Activated CD4-positive, alpha-beta T cell treated with anti-CD3 and anti-CD28 coated beads for 36 hours (primary cell): ENCODE measurements at regions of chr14 and their contacts with region 1.

Region 1: DNA sequence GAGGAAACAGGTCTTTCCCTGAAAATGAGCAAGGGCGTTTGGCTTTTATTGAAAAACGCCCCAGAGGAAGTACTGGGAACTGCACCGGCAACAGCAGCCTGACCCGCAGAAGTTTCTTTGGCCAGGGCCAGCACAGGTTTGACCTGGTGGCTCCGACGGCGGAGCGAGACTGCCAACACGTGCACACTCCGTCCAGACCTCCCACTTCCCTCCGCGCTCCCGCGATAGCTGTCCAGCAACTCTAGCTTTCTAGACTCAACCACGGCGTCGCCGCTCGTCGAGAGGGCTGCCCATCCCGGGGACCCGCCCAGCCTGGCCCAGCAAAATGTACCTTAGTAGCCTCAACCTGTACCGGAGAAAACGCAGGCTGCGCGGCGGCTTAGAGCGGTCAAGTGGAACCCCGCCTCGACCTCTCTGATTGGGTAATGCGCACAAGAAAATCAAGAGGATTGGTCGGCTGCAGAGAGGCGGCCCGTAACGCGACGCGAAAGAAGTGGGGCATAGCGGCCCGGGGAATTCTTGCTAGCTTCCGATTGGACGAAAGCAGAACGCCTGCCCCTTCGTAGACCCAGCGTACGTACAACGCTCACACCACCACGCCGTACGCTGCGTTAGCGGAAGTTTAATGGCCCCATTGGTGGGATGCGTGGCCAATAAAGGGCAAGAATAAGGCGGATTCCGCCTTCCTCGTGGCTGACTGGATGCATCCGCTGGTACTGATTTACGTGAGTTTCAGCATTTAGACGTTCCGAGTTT is at the start of gene WDR89:
- DNase-seq: peak; percentile 98
- ATAC-seq: peak; percentile 87
- H3K4me3 Mint-ChIP-seq: peak within 1 kb of the TSS; percentile 79
- H3K27ac Mint-ChIP-seq: peak within 1 kb of the TSS; percentile 97
- H3K4me1 Mint-ChIP-seq: peaks cover 43% of the 10 kb centered on the region
- H3K27me3 Mint-ChIP-seq: no peaks in the 10 kb centered on the region
- total RNA-seq, gene WDR89: 13.9 to 27.2 TPM

Region 2: GRCh38 chr14:63276492-63277342 is 364.9 kb before region 1 on chr14:
- CTCF ChIA-PET with region 1: no interaction called
- POLR2A ChIA-PET with region 1: no interaction called
- intact Hi-C with region 1: no loop called
- DNase-seq: no peak
- ATAC-seq: peak; percentile 77
- H3K4me3 Mint-ChIP-seq: no peak overlapping the region
- H3K27ac Mint-ChIP-seq: no peak overlapping the region
- H3K4me1 Mint-ChIP-seq: no peaks in the 10 kb centered on the region
- H3K27me3 Mint-ChIP-seq: peaks cover 6% of the 10 kb centered on the region

Region 3: GRCh38 chr14:63308723-63309317 is 332.8 kb before region 1 on chr14:
- CTCF ChIA-PET with region 1: no interaction called
- POLR2A ChIA-PET with region 1: no interaction called
- intact Hi-C with region 1: no loop called
- DNase-seq: peak; percentile 28
- ATAC-seq: no peak
- H3K4me3 Mint-ChIP-seq: no peak overlapping the region
- H3K27ac Mint-ChIP-seq: no peak overlapping the region
- H3K4me1 Mint-ChIP-seq: no peaks in the 10 kb centered on the region
- H3K27me3 Mint-ChIP-seq: peaks cover 5% of the 10 kb centered on the region

Region 4: DNA sequence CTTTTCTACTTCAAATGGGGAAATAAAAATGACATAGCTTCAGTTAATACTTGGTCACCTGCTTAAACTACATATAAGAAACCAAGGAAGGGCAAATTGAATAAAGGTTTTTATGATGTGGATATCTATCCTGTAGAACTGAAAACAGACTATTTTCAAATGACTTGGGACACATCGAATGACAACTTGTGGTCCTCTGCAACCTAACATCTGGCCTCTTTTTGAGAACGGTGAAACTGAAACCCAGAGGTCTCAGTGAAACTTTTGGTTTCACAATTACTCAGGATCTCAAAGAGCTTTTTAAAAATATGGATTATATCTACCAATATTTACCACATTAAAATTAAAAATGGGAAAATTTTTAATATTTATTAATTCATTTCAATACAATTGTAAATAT is 163.6 kb before region 1 on chr14:
- CTCF ChIA-PET with region 1: interaction called, 3 read pairs
- POLR2A ChIA-PET with region 1: interaction called, 5 read pairs
- intact Hi-C with region 1: loop called in 1 of 2 experiments (anchors 5 kb)
- DNase-seq: peak; percentile 30
- ATAC-seq: peak; percentile 90
- H3K4me3 Mint-ChIP-seq: no peak overlapping the region
- H3K27ac Mint-ChIP-seq: no peak overlapping the region
- H3K4me1 Mint-ChIP-seq: peaks cover 52% of the 10 kb centered on the region
- H3K27me3 Mint-ChIP-seq: no peaks in the 10 kb centered on the region

Region 5: GRCh38 chr14:63543000-63543825 is 98.4 kb before region 1 on chr14 and contains the start of gene PPP2R5E:
- CTCF ChIA-PET with region 1: interaction called, 4 read pairs
- POLR2A ChIA-PET with region 1: interaction called, 11 read pairs
- intact Hi-C with region 1: loop called (anchors 1 kb)
- DNase-seq: peak; percentile 98
- ATAC-seq: peak; percentile 99
- H3K4me3 Mint-ChIP-seq: peak within 1 kb of the TSS; percentile 86
- H3K27ac Mint-ChIP-seq: peak within 1 kb of the TSS; percentile 85
- H3K4me1 Mint-ChIP-seq: peaks cover 26% of the 10 kb centered on the region
- H3K27me3 Mint-ChIP-seq: no peaks in the 10 kb centered on the region
- total RNA-seq, gene PPP2R5E: 38.4 to 40.4 TPM

Region 6: DNA sequence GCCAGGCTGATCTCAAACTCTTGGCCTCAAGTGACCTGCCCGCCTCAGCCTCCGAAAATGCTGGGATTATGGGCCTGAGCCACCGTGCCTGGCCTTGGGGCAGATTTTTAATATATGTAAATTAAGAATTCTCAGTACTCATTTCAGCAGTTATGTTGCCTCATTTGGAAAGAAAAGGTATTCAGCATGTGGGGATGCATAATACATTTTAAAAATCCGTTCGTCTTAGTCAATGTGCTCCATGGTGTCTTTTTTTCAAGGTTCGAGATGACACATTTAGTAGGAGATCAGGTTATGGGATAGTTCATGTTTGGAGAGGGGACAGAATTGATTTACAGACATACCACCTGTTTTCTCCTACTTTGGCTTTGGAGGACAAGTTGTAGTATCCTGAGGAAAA is 221.4 kb after region 1 on chr14:
- CTCF ChIA-PET with region 1: no interaction called
- POLR2A ChIA-PET with region 1: interaction called, 4 read pairs
- intact Hi-C with region 1: loop called in 1 of 2 experiments (anchors 5 kb)
- DNase-seq: no peak
- ATAC-seq: no peak
- H3K4me3 Mint-ChIP-seq: no peak overlapping the region
- H3K27ac Mint-ChIP-seq: no peak overlapping the region
- H3K4me1 Mint-ChIP-seq: peaks cover 53% of the 10 kb centered on the region
- H3K27me3 Mint-ChIP-seq: no peaks in the 10 kb centered on the region

Region 7: GRCh38 chr14:64338616-64339316 is 697.1 kb after region 1 on chr14:
- CTCF ChIA-PET with region 1: no interaction called
- POLR2A ChIA-PET with region 1: no interaction called
- intact Hi-C with region 1: loop called in 1 of 2 experiments (anchors 2 kb)
- DNase-seq: peak; percentile 92
- ATAC-seq: peak; percentile 88
- H3K4me3 Mint-ChIP-seq: peak overlapping the region; percentile 93
- H3K27ac Mint-ChIP-seq: peak overlapping the region; percentile 87
- H3K4me1 Mint-ChIP-seq: peaks cover 18% of the 10 kb centered on the region
- H3K27me3 Mint-ChIP-seq: no peaks in the 10 kb centered on the region